ENCODE measurements at regions of chr13 and their contacts with region 1.

Region 1: GRCh38 chr13:22944378-22944777 is 236.4 kb upstream of the SGCG start:
- DNase-seq: no peak
- ATAC-seq: no peak

Region 2: GRCh38 chr13:22357132-22357531 is 587.2 kb before region 1 on chr13:
- intact Hi-C with region 1: no loop called
- DNase-seq: no peak
- ATAC-seq: no peak

Region 3: GRCh38 chr13:24360106-24360505 is 1415.7 kb after region 1 on chr13:
- intact Hi-C with region 1: loop called (anchors 10 kb)
- DNase-seq: no peak
- ATAC-seq: no peak